HCT116 (cell line): ENCODE measurements at regions of chr3 and their contacts with region 1.

Region 1: DNA sequence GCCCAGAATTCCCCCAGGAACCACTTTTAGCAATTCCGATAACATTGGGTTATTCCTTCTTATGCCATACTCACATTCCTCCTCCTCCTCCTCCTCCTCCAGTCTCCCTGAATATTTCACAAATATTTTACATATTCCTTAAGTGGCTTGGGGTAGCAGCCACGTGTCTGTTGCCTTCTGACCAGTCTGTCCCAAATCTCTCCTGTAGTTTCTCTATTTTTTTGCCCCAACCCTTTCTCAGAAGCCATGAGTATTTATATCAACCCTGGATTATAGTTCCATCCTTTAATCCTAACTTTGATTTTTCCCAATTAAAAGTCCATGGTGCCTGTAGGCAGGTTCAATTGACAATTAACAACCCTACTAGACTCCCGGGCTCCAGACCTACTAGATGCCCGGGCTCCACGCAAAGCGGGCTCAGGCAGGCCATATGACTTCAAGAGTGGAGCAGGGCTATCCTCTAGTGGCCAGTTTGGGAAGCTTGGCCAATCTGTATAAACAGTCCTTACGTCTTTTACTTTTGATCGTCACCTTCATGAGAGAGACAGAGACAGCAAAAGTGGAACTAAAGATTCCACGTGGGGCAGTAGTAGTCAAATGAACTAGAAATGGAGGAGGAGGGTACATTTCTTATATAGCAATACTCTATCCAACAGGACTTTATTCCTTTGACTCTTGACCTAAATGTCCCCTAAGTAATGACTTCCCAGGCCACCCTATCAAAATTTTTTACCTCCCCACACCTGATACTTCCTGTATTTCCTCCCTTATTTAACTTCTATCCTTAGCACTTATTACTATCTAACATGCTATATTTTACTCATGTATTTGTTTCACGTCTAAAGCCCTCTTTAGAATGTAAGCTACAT is 69.7 kb downstream of the USF3 start:
- DNase-seq: peak; percentile 79
- ATAC-seq: peak; percentile 99
- H3K4me3 ChIP-seq: peak overlapping the region; percentile 6 to 21; a peak in 1 of 4 replicates
- H3K27ac ChIP-seq: no peak overlapping the region
- H3K4me1 ChIP-seq: peaks cover 0 to 9% of the 10 kb centered on the region in 2 experiments; a peak in 1 of 4 replicates
- H3K27me3 ChIP-seq: no peaks in the 10 kb centered on the region
- CTCF ChIP-seq: peak; percentile 88 to 98 (median 95)
- POLR2A ChIP-seq: no peak
- RAD21 ChIP-seq: peak; percentile 92

Region 2: GRCh38 chr3:113035387-113035982 is 591.3 kb before region 1 on chr3:
- CTCF ChIA-PET with region 1: interaction called, 13 read pairs
- POLR2A ChIA-PET with region 1: no interaction called
- RAD21 ChIA-PET with region 1: no interaction called
- intact Hi-C with region 1: no loop called
- DNase-seq: peak; percentile 50
- ATAC-seq: peak; percentile 99
- H3K4me3 ChIP-seq: no peak overlapping the region
- H3K27ac ChIP-seq: no peak overlapping the region
- H3K4me1 ChIP-seq: no peaks in the 10 kb centered on the region
- H3K27me3 ChIP-seq: no peaks in the 10 kb centered on the region
- CTCF ChIP-seq: peak; percentile 49 to 89 (median 82); a peak in 5 of 6 replicates
- POLR2A ChIP-seq: no peak
- RAD21 ChIP-seq: peak; percentile 62

Region 3: DNA sequence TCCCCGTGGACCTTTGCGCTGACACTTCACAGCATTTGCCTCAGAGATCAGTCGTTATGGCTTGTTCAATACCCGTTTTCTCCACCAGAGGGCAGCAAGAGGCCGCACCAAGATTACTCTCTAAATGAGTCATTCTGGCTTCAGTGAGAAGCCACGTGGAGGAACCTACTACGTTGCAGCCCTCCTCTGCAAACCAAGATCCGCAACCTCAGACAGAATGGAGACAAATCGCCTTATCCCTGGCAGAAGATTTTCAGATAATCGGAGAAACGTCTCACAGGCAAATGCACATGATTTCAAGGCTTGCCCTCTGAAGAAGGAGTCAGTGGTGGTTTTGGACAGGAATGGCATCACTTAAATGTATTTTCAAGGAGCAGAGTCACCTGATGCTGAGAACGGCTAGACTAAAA is 575.4 kb before region 1 on chr3:
- CTCF ChIA-PET with region 1: no interaction called
- POLR2A ChIA-PET with region 1: no interaction called
- RAD21 ChIA-PET with region 1: no interaction called
- intact Hi-C with region 1: loop called (anchors 1 kb)
- DNase-seq: peak; percentile 71
- ATAC-seq: peak; percentile 96
- H3K4me3 ChIP-seq: no peak overlapping the region
- H3K27ac ChIP-seq: no peak overlapping the region
- H3K4me1 ChIP-seq: peaks cover 3 to 8% of the 10 kb centered on the region in 2 experiments; a peak in 2 of 4 replicates
- H3K27me3 ChIP-seq: no peaks in the 10 kb centered on the region
- CTCF ChIP-seq: peak; percentile 79 to 95 (median 91)
- POLR2A ChIP-seq: no peak
- RAD21 ChIP-seq: peak; percentile 96

Region 4: DNA sequence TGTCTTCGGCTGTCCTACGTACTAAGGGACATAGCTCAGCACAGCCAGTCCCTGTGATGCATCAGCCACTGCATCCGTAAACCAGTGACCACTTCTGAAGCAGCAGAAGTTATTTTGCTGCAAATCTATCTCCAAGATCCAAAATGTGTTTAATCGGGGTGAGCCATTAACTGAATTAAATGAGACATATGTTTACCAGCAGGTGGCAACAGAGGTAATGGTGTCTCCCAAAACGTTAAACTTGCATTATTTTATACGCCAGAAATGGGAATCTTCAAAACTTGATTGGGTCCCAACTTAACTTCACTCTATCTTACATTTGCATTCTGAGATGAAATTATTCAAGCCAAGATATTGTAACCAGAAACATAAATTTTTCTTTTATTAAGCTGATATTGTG is 490.7 kb before region 1 on chr3:
- CTCF ChIA-PET with region 1: no interaction called
- POLR2A ChIA-PET with region 1: no interaction called
- RAD21 ChIA-PET with region 1: no interaction called
- intact Hi-C with region 1: loop called (anchors 5 kb)
- DNase-seq: peak; percentile 16
- ATAC-seq: peak; percentile 64
- H3K4me3 ChIP-seq: no peak overlapping the region
- H3K27ac ChIP-seq: no peak overlapping the region
- H3K4me1 ChIP-seq: no peaks in the 10 kb centered on the region
- H3K27me3 ChIP-seq: no peaks in the 10 kb centered on the region
- CTCF ChIP-seq: peak; percentile 45 to 62 (median 55); a peak in 5 of 6 replicates
- POLR2A ChIP-seq: no peak
- RAD21 ChIP-seq: peak; percentile 68

Region 5: DNA sequence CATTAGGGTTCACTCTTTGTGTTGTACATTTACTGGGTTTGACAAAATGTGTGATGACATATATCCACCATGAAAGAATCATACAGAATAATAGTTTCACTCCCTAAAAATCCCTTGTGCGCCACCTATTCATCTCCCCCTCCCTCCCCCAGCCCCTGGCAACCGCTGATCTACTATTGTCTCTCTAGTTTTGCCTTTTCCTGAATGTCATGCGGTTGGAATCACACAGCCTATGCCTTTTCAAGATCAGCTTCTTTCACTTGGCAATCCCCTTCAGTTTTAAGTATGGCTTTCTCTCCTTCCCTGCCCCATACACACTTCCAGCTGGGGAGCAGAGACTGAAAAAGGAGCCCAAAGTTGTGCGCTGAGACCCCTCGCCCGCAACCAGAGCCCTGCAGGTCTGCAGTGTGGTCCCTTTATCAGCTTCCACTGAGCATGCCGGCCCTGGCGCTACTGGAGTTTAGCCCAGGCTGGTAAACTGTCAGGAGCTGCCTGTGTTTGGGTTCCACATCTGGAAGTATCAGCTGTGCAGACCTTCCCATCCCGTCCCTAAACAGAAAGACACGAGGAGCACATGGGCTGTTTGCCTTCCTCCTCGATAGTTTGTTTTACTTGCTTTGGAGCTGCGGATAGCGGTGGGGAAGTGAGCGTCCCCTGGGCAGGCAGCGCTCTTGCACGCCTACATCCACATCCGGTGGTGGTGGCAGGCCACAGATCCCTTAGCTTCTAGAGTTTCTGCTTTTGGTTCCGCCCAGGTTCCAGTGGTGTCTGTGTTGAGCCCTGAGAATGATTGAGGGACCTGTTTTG is 403.1 kb before region 1 on chr3:
- CTCF ChIA-PET with region 1: no interaction called
- POLR2A ChIA-PET with region 1: no interaction called
- RAD21 ChIA-PET with region 1: no interaction called
- intact Hi-C with region 1: no loop called
- DNase-seq: no peak
- ATAC-seq: no peak
- H3K4me3 ChIP-seq: no peak overlapping the region
- H3K27ac ChIP-seq: no peak overlapping the region
- H3K4me1 ChIP-seq: no peaks in the 10 kb centered on the region
- H3K27me3 ChIP-seq: no peaks in the 10 kb centered on the region
- CTCF ChIP-seq: no peak
- POLR2A ChIP-seq: no peak
- RAD21 ChIP-seq: no peak

Region 6: GRCh38 chr3:113287803-113288648 is 338.7 kb before region 1 on chr3:
- CTCF ChIA-PET with region 1: interaction called, 3 read pairs
- POLR2A ChIA-PET with region 1: no interaction called
- RAD21 ChIA-PET with region 1: no interaction called
- intact Hi-C with region 1: loop called (anchors 10 kb)
- DNase-seq: peak; percentile 57
- ATAC-seq: peak; percentile 66
- H3K4me3 ChIP-seq: no peak overlapping the region
- H3K27ac ChIP-seq: no peak overlapping the region
- H3K4me1 ChIP-seq: peaks cover 8 to 11% of the 10 kb centered on the region in 2 experiments; a peak in 3 of 4 replicates
- H3K27me3 ChIP-seq: no peaks in the 10 kb centered on the region
- CTCF ChIP-seq: peak; percentile 94 to 97 (median 97)
- POLR2A ChIP-seq: no peak
- RAD21 ChIP-seq: peak; percentile 96

Region 7: DNA sequence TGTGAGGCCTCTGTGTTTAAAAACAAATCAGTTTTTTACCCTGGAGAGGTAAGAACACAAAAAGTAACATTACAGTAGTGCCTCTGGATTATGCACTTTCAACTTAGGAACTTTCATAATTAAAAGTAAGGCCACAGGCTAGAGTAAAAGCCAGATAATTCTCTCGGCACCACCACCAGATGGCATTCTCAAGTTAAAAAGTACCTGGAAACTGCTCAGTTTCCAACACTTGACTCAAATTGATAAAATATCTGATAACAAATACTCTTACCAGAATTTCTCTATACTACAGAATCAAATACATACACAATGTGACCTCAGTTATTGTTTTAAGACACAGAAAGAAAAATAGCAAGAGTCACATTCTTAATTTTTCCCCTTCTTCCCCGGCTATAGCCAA is 131.7 kb before region 1 on chr3:
- CTCF ChIA-PET with region 1: interaction called, 4 read pairs
- POLR2A ChIA-PET with region 1: no interaction called
- RAD21 ChIA-PET with region 1: no interaction called
- intact Hi-C with region 1: loop called (anchors 1 kb)
- DNase-seq: peak; percentile 23
- ATAC-seq: peak; percentile 53; the same call in 1 of the 2 replicates
- H3K4me3 ChIP-seq: no peak overlapping the region
- H3K27ac ChIP-seq: no peak overlapping the region
- H3K4me1 ChIP-seq: no peaks in the 10 kb centered on the region
- H3K27me3 ChIP-seq: no peaks in the 10 kb centered on the region
- CTCF ChIP-seq: peak; percentile 38 to 52 (median 48); a peak in 5 of 6 replicates
- POLR2A ChIP-seq: no peak
- RAD21 ChIP-seq: peak; percentile 51